ENCODE measurements at regions of chr4 and their contacts with region 1.

Region 1: GRCh38 chr4:182917182-182918043 is at the start of gene DCTD:
- DNase-seq: peak; percentile 85
- H3K4me3 Mint-ChIP-seq: peak within 1 kb of the TSS; percentile 83
- H3K27ac Mint-ChIP-seq: peak within 1 kb of the TSS; percentile 93
- H3K4me1 Mint-ChIP-seq: peaks cover 51% of the 10 kb centered on the region
- H3K27me3 Mint-ChIP-seq: no peaks in the 10 kb centered on the region
- total RNA-seq, gene DCTD: 115 to 117 TPM

Region 2: DNA sequence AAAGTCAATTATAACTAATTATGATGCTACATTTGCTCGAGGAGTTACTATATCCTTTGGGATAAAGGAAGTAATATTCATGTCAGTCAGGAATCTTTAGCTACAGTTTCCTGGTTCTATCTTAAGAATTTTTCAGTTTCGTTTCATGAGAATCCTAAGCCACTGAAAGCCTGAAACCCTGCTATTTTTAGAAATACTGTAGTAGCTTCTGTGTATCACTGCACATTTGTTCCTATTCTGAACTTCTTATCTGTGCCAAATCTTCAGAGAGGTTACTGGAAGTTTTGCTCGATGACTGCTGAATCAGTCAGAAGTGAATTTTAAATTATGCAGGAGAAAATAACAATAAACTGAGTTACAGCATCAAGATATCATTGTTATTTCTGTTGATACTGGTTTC is 425.0 kb before region 1 on chr4:
- CTCF ChIA-PET with region 1: no interaction called
- POLR2A ChIA-PET with region 1: interaction called, 3 read pairs
- intact Hi-C with region 1: loop called (anchors 5 kb)
- DNase-seq: no peak
- H3K4me3 Mint-ChIP-seq: no peak overlapping the region
- H3K27ac Mint-ChIP-seq: no peak overlapping the region
- H3K4me1 Mint-ChIP-seq: peaks cover 5% of the 10 kb centered on the region
- H3K27me3 Mint-ChIP-seq: peaks cover 3% of the 10 kb centered on the region

Region 3: GRCh38 chr4:183017962-183018361 is 100.5 kb after region 1 on chr4:
- CTCF ChIA-PET with region 1: no interaction called
- POLR2A ChIA-PET with region 1: no interaction called
- intact Hi-C with region 1: no loop called
- DNase-seq: no peak
- H3K4me3 Mint-ChIP-seq: no peak overlapping the region
- H3K27ac Mint-ChIP-seq: no peak overlapping the region
- H3K4me1 Mint-ChIP-seq: no peaks in the 10 kb centered on the region
- H3K27me3 Mint-ChIP-seq: peaks cover 3% of the 10 kb centered on the region

Region 4: GRCh38 chr4:183098723-183099536 is 181.5 kb after region 1 on chr4 and contains the start of gene WWC2:
- CTCF ChIA-PET with region 1: no interaction called
- POLR2A ChIA-PET with region 1: interaction called, 3 read pairs
- intact Hi-C with region 1: loop called (anchors 10 kb)
- DNase-seq: peak; percentile 70
- H3K4me3 Mint-ChIP-seq: peak within 1 kb of the TSS; percentile 57
- H3K27ac Mint-ChIP-seq: no peak within 1 kb of the TSS
- H3K4me1 Mint-ChIP-seq: peaks cover 5% of the 10 kb centered on the region
- H3K27me3 Mint-ChIP-seq: peaks cover 17% of the 10 kb centered on the region
- total RNA-seq, gene WWC2: 3.6 to 5.4 TPM

Region 5: GRCh38 chr4:183348706-183349659 is 431.6 kb after region 1 on chr4:
- CTCF ChIA-PET with region 1: no interaction called
- POLR2A ChIA-PET with region 1: no interaction called
- intact Hi-C with region 1: loop called (anchors 2 kb)
- DNase-seq: peak; percentile 75
- H3K4me3 Mint-ChIP-seq: no peak overlapping the region
- H3K27ac Mint-ChIP-seq: peak overlapping the region; percentile 56
- H3K4me1 Mint-ChIP-seq: peaks cover 16% of the 10 kb centered on the region
- H3K27me3 Mint-ChIP-seq: peaks cover 35% of the 10 kb centered on the region

Region 6: GRCh38 chr4:183444214-183445066 is 527.0 kb after region 1 on chr4 and contains the start of gene CDKN2AIP:
- CTCF ChIA-PET with region 1: no interaction called
- POLR2A ChIA-PET with region 1: interaction called, 4 read pairs
- intact Hi-C with region 1: loop called (anchors 5 kb)
- DNase-seq: peak; percentile 95
- H3K4me3 Mint-ChIP-seq: peak within 1 kb of the TSS; percentile 96
- H3K27ac Mint-ChIP-seq: peak within 1 kb of the TSS; percentile 98
- H3K4me1 Mint-ChIP-seq: peaks cover 41% of the 10 kb centered on the region
- H3K27me3 Mint-ChIP-seq: no peaks in the 10 kb centered on the region
- total RNA-seq, gene CDKN2AIP: 23.0 to 23.7 TPM

Measured in activated CD4-positive, alpha-beta memory T cell treated with anti-CD3 and anti-CD28 coated beads for 36 hours (primary cell).